GM12878 (cell line): ENCODE measurements at regions of chr10 and their contacts with region 1.

Region 1: DNA sequence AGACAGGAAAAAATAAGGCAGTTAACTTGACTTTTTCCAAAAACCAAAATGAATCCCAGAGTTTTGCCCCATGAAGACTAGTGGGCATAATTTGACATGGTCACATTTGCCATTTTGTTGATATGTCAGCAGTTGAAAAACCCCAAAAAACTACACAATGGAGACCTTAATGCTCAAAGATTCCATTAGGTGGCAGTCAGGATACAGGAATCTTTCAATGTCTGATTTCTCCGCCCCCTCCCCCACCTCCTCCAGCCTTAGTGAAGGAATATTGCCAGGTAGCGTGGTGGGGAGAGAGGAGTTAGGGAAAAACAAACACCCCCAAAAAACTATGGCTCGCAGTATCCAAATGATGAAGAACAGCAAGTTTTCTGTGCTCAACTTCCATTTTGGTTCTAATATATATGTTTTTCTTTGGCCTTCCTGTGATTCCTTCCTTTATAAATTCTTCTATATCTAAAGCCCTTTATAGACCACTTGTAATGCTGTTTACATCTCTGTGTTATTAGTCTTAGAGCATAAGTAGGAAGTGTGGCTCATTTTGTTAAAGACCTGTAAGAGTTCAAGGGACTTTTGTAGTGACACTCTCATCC is 6.7 kb upstream of the SMNDC1 start:
- DNase-seq: peak; percentile 47
- ATAC-seq: peak; percentile 83
- H3K4me3 ChIP-seq: no peak overlapping the region
- H3K27ac ChIP-seq: no peak overlapping the region
- H3K4me1 ChIP-seq: 0 out of 2 replicates have a peak, but pooled peaks cover 2% of the 10 kb centered on the region
- H3K27me3 ChIP-seq: no peaks in the 10 kb centered on the region
- CTCF ChIP-seq: peak; percentile 62 to 76 (median 68); a peak in 5 of 6 replicates
- EP300 ChIP-seq: no peak
- POLR2A ChIP-seq: no peak
- RAD21 ChIP-seq: peak; percentile 96

Region 2: DNA sequence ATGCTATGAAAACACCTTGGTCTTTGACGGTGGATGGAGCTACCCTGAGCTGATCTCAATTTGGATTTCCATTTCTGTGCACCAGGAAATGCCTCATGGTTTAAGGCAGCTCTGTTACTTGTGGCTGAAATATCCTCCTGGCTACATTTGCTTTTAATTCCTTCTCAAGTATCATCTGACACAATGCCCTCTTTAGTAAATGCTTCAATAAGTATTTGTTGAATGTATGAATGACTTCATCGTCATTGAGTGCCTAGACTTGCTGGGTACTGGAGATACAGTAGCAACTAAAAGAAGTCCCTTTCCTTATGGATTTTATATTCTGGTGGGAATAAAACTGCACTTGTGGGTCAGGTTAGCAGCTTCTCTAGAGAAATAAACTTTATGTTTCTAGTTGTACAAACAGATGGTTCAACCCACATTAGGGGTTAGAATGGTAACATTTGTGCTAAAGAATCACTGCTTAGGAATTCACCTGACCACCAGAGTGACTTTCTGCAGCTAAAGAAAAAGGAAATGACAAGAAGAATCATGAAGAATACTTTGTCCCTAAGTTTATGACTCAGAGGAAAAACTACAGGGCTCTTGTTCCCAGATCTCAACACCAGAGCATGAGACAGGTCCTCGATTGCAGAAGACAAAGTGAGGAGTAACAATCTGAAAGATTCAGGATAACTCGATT is 15.0 kb after region 1 on chr10:
- CTCF ChIA-PET with region 1: interaction called, 19 read pairs
- POLR2A ChIA-PET with region 1: interaction called, 12 read pairs
- RAD21 ChIA-PET with region 1: interaction called, 22 read pairs
- SMC1A ChIA-PET with region 1: interaction called, 61 read pairs
- in situ Hi-C with region 1: no loop called
- intact Hi-C with region 1: no loop called
- DNase-seq: peak; percentile 51
- ATAC-seq: peak; percentile 49
- H3K4me3 ChIP-seq: no peak overlapping the region
- H3K27ac ChIP-seq: peak overlapping the region; percentile 79
- H3K4me1 ChIP-seq: peaks cover 39% of the 10 kb centered on the region
- H3K27me3 ChIP-seq: no peaks in the 10 kb centered on the region
- CTCF ChIP-seq: no peak
- EP300 ChIP-seq: peak in 1 of 2 experiments; percentile 60; a peak in 1 of 4 replicates
- POLR2A ChIP-seq: no peak
- RAD21 ChIP-seq: no peak

Region 3: GRCh38 chr10:110336111-110336721 is 24.8 kb after region 1 on chr10:
- CTCF ChIA-PET with region 1: interaction called, 5 read pairs
- POLR2A ChIA-PET with region 1: no interaction called
- RAD21 ChIA-PET with region 1: no interaction called
- SMC1A ChIA-PET with region 1: interaction called, 11 read pairs
- in situ Hi-C with region 1: no loop called
- intact Hi-C with region 1: no loop called
- DNase-seq: no peak
- ATAC-seq: no peak
- H3K4me3 ChIP-seq: no peak overlapping the region
- H3K27ac ChIP-seq: no peak overlapping the region
- H3K4me1 ChIP-seq: no peaks in the 10 kb centered on the region
- H3K27me3 ChIP-seq: no peaks in the 10 kb centered on the region
- CTCF ChIP-seq: no peak
- EP300 ChIP-seq: no peak
- POLR2A ChIP-seq: no peak
- RAD21 ChIP-seq: no peak

Region 4: GRCh38 chr10:110387983-110388687 is 76.7 kb after region 1 on chr10:
- CTCF ChIA-PET with region 1: no interaction called
- POLR2A ChIA-PET with region 1: no interaction called
- RAD21 ChIA-PET with region 1: no interaction called
- SMC1A ChIA-PET with region 1: interaction called, 3 read pairs
- in situ Hi-C with region 1: no loop called
- intact Hi-C with region 1: loop called (anchors 1 kb)
- DNase-seq: peak; percentile 83
- ATAC-seq: peak; percentile 87
- H3K4me3 ChIP-seq: no peak overlapping the region
- H3K27ac ChIP-seq: peak overlapping the region; percentile 75
- H3K4me1 ChIP-seq: peaks cover 26% of the 10 kb centered on the region
- H3K27me3 ChIP-seq: no peaks in the 10 kb centered on the region
- CTCF ChIP-seq: no peak
- EP300 ChIP-seq: peak in 1 of 2 experiments; percentile 96; a peak in 3 of 4 replicates
- POLR2A ChIP-seq: no peak
- RAD21 ChIP-seq: peak; percentile 22; the same call in 1 of the 2 replicates

Region 5: DNA sequence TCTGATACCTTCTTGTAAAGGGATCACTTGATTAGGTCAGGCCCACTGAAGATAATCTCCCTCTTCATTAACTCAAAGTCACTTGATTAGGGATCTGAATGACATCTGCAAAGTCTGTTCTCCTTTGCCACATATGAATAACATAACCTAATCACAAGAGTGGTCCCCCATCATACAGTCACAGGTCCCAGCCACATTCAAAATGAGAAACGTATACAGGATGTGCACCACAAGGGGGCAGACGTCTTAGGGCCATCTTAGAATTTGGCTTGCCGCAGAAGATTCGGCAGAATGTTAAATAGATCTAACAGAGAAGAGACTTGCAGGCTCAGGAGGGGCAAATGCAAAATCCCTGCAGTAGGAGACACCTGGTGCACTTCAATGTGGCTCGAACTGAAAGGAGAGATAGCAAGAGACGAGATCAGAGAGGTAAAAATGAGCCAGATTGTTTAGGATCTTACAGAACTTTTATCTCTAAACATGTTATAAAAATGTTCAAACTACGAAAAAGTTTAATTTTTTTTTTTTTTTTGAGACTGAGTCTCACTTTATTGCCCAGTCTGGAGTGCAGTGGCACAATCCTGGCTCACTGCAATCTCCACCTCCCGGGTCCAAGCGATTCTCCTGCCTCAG is 245.6 kb after region 1 on chr10:
- CTCF ChIA-PET with region 1: interaction called, 191 read pairs
- POLR2A ChIA-PET with region 1: no interaction called
- RAD21 ChIA-PET with region 1: interaction called, 151 read pairs
- SMC1A ChIA-PET with region 1: interaction called, 58 read pairs
- in situ Hi-C with region 1: no loop called
- intact Hi-C with region 1: no loop called
- DNase-seq: no peak
- ATAC-seq: peak; percentile 99
- H3K4me3 ChIP-seq: no peak overlapping the region
- H3K27ac ChIP-seq: no peak overlapping the region
- H3K4me1 ChIP-seq: no peaks in the 10 kb centered on the region
- H3K27me3 ChIP-seq: no peaks in the 10 kb centered on the region
- CTCF ChIP-seq: peak; percentile 77 to 87 (median 83)
- EP300 ChIP-seq: no peak
- POLR2A ChIP-seq: no peak
- RAD21 ChIP-seq: peak; percentile 58

Region 6: GRCh38 chr10:110600487-110601101 is 289.1 kb after region 1 on chr10:
- CTCF ChIA-PET with region 1: interaction called, 81 read pairs
- POLR2A ChIA-PET with region 1: interaction called, 3 read pairs
- RAD21 ChIA-PET with region 1: interaction called, 34 read pairs
- SMC1A ChIA-PET with region 1: interaction called, 40 read pairs
- in situ Hi-C with region 1: loop called (anchors 5 kb)
- intact Hi-C with region 1: loop called (anchors 1 kb)
- DNase-seq: no peak
- ATAC-seq: peak; percentile 95
- H3K4me3 ChIP-seq: no peak overlapping the region
- H3K27ac ChIP-seq: no peak overlapping the region
- H3K4me1 ChIP-seq: no peaks in the 10 kb centered on the region
- H3K27me3 ChIP-seq: no peaks in the 10 kb centered on the region
- CTCF ChIP-seq: peak; percentile 40 to 58 (median 54); a peak in 5 of 6 replicates
- EP300 ChIP-seq: no peak
- POLR2A ChIP-seq: no peak
- RAD21 ChIP-seq: peak; percentile 54; the same call in 1 of the 2 replicates